Mammary epithelial cell (primary cell): ENCODE measurements at regions of chr1 and their contacts with region 1.

Region 1: GRCh38 chr1:154911691-154912550 is 24.6 kb downstream of the PMVK start:
- DNase-seq: no peak
- H3K4me3 ChIP-seq: no peak overlapping the region
- H3K27ac ChIP-seq: no peak overlapping the region
- H3K4me1 ChIP-seq: no peaks in the 10 kb centered on the region
- H3K27me3 ChIP-seq: no peaks in the 10 kb centered on the region
- CTCF ChIP-seq: no peak

Region 2: GRCh38 chr1:154546264-154547063 is 365.5 kb before region 1 on chr1:
- CTCF ChIA-PET with region 1: no interaction called
- dilution Hi-C with region 1: loop called (anchors 5 kb)
- in situ Hi-C with region 1: no loop called
- intact Hi-C with region 1: no loop called
- DNase-seq: peak; percentile 44
- H3K4me3 ChIP-seq: no peak overlapping the region
- H3K27ac ChIP-seq: no peak overlapping the region
- H3K4me1 ChIP-seq: peaks cover 13% of the 10 kb centered on the region
- H3K27me3 ChIP-seq: no peaks in the 10 kb centered on the region
- CTCF ChIP-seq: peak; percentile 55 to 81

Region 3: DNA sequence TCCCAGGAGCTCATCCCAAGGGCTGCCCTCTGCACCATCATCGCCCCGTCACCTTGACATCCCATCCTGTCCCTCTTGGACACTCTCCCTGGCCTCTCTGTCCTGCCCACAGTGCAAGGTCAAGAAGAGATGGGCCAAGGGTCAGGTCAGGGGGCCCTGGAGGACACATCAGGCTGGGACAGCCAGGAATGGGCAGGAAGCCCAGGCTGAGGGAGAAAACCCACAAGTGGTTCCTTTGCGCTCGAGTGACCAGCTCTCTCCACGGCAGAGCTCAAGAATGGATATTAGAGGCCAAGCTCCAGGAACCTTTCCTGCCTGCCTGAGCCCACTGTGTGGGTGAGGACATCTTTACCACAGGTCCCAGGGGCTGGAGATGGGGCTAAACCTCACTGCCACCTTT is 82.9 kb before region 1 on chr1:
- CTCF ChIA-PET with region 1: no interaction called
- dilution Hi-C with region 1: loop called (anchors 5 kb)
- in situ Hi-C with region 1: no loop called
- intact Hi-C with region 1: no loop called
- DNase-seq: no peak
- H3K4me3 ChIP-seq: no peak overlapping the region
- H3K27ac ChIP-seq: no peak overlapping the region
- H3K4me1 ChIP-seq: no peaks in the 10 kb centered on the region
- H3K27me3 ChIP-seq: no peaks in the 10 kb centered on the region
- CTCF ChIP-seq: no peak

Region 4: DNA sequence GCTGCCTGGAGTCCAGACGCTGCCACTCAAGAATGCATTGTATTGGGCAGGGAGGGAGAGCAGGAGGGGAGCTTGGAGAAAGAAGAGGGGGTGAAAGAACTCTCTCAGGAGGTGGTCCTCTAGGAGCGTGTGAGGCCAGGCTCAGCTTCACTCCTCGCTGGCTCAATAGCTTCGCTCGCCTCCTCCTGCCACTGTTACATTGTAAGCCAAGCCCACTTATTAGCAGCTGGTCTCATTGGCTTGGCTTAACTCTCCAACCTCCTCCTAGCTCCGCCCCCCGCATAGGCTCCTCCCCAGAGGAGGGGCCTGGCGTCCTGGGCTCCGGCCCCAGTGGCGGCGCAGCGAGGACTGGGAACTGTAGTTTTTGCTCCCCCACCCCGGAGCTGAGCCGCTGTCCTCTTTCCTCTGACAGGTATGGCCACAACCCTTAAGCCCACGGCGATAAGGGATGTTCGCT is 41.8 kb before region 1 on chr1 and contains the start of gene KCNN3:
- CTCF ChIA-PET with region 1: no interaction called
- dilution Hi-C with region 1: loop called (anchors 5 kb)
- in situ Hi-C with region 1: no loop called
- intact Hi-C with region 1: no loop called
- DNase-seq: peak; percentile 87
- H3K4me3 ChIP-seq: no peak within 1 kb of the TSS
- H3K27ac ChIP-seq: no peak within 1 kb of the TSS
- H3K4me1 ChIP-seq: peaks cover 12% of the 10 kb centered on the region
- H3K27me3 ChIP-seq: peaks cover 8% of the 10 kb centered on the region
- CTCF ChIP-seq: no peak
- total RNA-seq, gene KCNN3: not detected

Region 5: DNA sequence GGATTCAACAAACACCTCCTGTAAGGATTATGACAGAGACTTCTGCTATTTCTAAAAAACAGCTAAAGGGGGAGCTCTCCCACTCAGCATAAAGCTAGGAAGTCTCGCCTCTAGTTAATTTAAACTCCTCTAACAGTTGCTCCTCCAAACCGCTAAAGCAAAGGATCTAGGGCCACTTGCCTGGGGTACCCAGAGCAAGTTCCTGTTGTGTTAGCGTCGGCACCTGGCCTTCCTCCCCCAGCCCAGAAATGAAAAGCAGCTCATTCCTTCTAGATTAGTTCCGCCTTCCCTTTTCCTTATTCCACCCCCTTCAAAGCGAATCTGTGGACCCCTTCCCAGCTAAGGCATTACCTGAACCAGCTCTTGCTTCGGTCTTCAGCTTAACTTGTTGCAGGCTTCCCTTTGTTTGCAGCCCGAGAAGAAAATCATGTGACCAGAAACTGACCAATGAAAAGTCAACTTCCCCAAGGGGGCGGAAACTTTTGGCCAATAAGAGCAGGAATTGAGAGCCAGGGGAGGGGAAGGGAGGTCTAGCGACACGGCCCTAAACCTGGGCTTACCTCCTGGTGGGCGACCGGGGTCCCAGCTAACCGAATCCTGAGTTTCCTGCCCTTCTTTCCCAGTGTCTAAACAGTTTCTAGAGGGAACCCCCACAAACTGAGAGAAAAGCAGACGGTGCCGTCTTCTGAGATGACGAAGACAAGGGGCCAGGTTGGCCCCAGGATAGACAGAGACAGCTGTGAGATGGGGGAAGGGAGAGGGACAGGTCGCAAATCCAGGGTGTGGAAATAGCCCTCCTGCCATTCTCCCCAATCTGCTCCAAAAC is 44.0 kb after region 1 on chr1 and contains the start of gene PBXIP1:
- CTCF ChIA-PET with region 1: no interaction called
- dilution Hi-C with region 1: loop called (anchors 5 kb)
- in situ Hi-C with region 1: no loop called
- intact Hi-C with region 1: no loop called
- DNase-seq: peak; percentile 85
- H3K4me3 ChIP-seq: peak within 1 kb of the TSS; percentile 56 to 65 (median 59)
- H3K27ac ChIP-seq: peak within 1 kb of the TSS; percentile 69
- H3K4me1 ChIP-seq: peaks cover 20% of the 10 kb centered on the region
- H3K27me3 ChIP-seq: no peaks in the 10 kb centered on the region
- CTCF ChIP-seq: peak in 1 of 2 donors; percentile 41
- total RNA-seq, gene PBXIP1: 17.7 to 52.0 TPM

Region 6: DNA sequence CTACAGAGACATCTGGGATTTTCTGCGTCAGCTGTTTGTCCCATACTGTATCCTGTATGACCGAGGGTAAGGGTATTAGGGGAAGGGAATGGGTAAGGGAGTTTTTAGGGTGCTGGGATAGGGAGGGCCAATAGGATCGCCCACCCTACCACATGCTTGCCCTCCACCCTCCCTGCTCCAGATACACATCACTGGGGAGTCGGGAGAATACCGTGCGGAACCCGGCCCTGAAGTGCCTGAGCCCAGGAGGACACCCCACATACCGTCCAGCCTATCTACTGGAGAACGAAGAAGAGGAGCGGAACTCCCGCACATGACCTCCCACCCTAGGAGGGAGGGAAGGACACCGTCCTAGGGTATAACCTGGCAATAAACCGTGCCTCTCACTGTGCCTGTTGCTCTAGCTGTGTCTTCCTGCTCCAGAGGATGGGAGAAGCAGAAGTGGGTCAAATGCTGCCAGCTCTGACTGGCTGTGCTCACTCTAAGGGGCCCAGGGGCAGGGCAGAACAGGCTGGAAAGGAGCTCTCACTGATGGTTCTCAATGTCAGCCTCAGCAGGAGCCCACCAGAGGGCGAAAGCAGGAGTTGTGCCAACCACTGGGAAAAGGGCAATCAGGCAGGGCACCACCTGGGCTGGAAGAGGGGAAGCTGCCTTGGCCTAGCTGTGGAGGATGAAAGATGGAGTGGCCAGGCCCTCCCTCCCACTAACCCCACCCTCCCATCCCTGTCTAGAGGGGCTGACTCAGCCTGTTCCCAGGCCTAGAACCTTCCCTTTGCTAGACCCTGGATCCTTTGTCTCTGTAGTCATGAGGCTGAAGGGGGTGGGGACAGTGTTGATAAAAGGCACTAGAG is 81.0 kb after region 1 on chr1:
- CTCF ChIA-PET with region 1: no interaction called
- dilution Hi-C with region 1: loop called (anchors 5 kb)
- in situ Hi-C with region 1: no loop called
- intact Hi-C with region 1: no loop called
- DNase-seq: no peak
- H3K4me3 ChIP-seq: no peak overlapping the region
- H3K27ac ChIP-seq: no peak overlapping the region
- H3K4me1 ChIP-seq: no peaks in the 10 kb centered on the region
- H3K27me3 ChIP-seq: no peaks in the 10 kb centered on the region
- CTCF ChIP-seq: peak; percentile 11 to 17